GM10248 (cell line): ENCODE measurements at regions of chr7 and their contacts with region 1.

Region 1: GRCh38 chr7:149686002-149686401 is 87.4 kb downstream of the ZNF467 start:
- DNase-seq: no peak
- CTCF ChIP-seq: no peak

Region 2: DNA sequence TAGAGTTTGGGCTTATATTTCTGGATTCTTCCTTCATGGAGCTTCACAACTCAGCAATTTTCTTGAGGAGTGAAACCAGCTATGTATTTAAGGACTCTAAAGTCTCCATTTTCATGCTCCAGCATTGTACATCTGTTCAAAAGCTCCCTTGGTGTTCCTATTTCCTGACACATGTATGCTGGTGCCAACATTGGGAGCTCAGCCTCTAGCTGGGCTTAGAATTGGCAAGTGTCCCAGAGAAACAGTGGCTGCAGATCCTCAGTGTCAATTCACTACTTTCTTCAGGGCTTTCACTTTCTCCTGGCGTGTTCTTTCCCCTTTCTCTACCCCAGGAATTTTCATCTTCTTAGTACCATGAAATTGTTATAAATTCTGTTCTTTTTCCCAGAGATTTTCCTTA is 15.7 kb before region 1 on chr7:
- CTCF ChIA-PET with region 1: interaction called, 49 read pairs
- POLR2A ChIA-PET with region 1: no interaction called
- DNase-seq: no peak
- CTCF ChIP-seq: no peak

Region 3: DNA sequence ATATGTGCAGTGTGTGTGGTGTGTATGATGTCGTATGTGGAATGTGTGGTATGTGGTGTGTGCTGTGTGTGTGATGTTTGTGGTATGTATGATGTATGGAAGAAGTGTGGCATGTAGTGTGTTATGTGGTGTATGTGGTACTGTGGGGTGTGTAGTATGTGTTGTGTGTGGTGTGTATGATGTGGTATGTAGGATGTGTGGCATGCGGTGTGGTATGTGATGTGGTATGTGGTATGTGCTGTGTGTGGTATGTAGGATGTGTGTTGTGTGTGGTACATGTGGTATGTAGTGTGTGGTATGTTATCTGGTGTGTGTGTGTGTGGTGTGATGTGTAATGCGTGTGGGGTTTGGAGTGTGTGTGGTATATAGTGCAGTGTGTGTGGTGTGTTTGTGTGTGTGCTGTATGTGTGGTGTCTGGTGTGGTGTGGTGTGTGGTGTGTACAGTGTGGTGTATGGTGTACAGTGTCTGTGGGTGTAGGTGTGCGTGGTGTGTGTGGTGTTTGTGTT is 317.4 kb after region 1 on chr7:
- CTCF ChIA-PET with region 1: no interaction called
- POLR2A ChIA-PET with region 1: no interaction called
- DNase-seq: no peak
- CTCF ChIP-seq: no peak